Right cardiac atrium (tissue), 5 donors: ENCODE measurements at regions of chr1 and their contacts with region 1.

Region 1: DNA sequence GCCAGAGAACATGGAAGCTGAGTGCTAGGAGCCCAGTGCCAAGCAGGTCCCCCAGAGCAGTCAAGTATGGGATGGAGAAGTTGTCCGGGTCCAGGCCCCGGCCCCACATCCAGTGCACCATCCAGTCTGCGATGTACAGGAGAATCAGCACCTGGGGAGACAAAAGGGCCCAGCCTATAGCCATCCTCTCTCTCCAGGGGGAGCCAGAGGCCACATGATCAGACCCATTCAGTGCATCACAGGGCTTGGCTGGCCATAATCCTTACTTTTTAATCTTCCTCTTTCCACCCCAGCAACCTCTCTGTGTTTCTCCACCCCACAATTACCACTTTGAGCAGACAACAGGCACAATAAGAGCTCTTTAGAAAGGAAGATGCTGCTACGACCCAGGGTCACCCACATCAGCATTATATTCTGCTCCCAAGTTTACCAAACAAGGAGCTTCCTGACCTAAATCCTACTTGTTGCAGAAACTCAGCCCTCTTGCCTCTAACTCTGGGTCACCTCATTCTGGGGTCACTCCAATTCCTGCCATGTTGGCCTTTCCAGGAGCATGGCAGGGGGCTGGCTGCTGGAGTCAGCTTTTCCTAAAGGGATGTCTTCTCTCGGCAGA is 16.4 kb upstream of the RAB29 start:
- DNase-seq: peak; percentile 52 to 85 (median 76)
- ATAC-seq: peak; percentile 69 to 73
- H3K4me3 ChIP-seq: no peak overlapping the region
- H3K27ac ChIP-seq: no peak overlapping the region
- H3K4me1 ChIP-seq: no peaks in the 10 kb centered on the region
- H3K27me3 ChIP-seq: no peaks in the 10 kb centered on the region

Region 2: GRCh38 chr1:204927673-204928641 is 863.7 kb before region 1 on chr1:
- intact Hi-C with region 1: no loop called
- DNase-seq: peak in 1 of 3 donors; percentile 57
- ATAC-seq: peak; percentile 49 to 60
- H3K4me3 ChIP-seq: no peak overlapping the region
- H3K27ac ChIP-seq: no peak overlapping the region
- H3K4me1 ChIP-seq: peaks cover 19% of the 10 kb centered on the region
- H3K27me3 ChIP-seq: no peaks in the 10 kb centered on the region

Region 3: GRCh38 chr1:205466595-205467181 is 325.0 kb before region 1 on chr1:
- intact Hi-C with region 1: no loop called
- DNase-seq: no peak
- ATAC-seq: no peak
- H3K4me3 ChIP-seq: no peak overlapping the region
- H3K27ac ChIP-seq: no peak overlapping the region
- H3K4me1 ChIP-seq: no peaks in the 10 kb centered on the region
- H3K27me3 ChIP-seq: no peaks in the 10 kb centered on the region

Region 4: GRCh38 chr1:205977402-205978014 is 185.8 kb after region 1 on chr1:
- intact Hi-C with region 1: loop called (anchors 2 to 10 kb)
- DNase-seq: peak; percentile 65 to 89 (median 81)
- ATAC-seq: peak; percentile 76 to 78
- H3K4me3 ChIP-seq: no peak overlapping the region
- H3K27ac ChIP-seq: peak overlapping the region; percentile 93
- H3K4me1 ChIP-seq: peaks cover 4% of the 10 kb centered on the region
- H3K27me3 ChIP-seq: no peaks in the 10 kb centered on the region